Dorsolateral prefrontal cortex (tissue), 120 donors: ENCODE measurements at regions of chr7 and their contacts with region 1.

Region 1: DNA sequence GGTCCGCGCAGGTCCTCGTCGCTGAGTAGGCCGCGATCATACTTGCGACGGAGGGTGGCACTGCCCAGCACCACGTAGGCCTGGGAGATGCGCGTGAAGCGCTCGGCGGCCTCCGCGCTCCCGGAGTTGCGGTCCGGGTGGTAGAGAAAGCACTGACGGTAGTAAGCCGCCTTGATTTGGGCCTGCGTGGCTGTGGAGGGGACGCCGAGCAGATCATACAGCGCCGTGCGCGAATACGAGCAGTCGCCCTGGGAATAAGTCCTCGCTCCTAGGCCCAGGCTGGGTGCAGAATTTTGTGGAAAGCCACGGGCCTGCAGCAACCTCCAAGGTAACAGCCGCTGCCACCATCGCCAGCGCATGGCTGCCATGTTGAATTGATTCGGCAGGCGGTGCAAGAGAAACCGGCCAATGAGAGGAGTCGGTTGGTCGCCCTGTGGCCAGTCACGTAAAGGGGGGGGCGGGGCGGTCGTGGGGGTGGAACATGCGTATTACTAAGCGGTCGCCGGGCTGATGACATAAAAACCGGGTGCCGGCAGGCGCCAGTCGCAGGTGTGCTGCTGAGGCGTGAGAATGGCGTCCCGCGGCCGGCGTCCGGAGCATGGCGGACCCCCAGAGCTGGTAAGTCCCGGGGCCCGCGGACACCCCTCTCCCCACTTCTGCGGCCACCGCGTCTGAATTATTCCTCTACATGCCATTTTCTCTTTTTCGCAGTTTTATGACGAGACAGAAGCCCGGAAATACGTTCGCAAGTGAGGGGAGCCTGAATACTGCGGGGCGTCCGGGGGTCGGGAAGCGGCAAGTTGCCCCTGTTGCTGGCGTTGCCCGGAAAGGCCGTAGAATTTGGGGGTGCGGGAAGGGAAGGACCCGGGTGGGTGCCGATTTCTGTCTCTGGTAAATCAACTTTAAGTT is at the starts of genes BUD23 and DNAJC30:
- DNase-seq: peak; percentile 90 to 96 (median 94)
- H3K4me3 ChIP-seq: peak within 1 kb of the TSS; percentile 67 to 100 (median 96)
- H3K27ac ChIP-seq: peak within 1 kb of the TSS in 58 of 59 donors; percentile 13 to 94 (median 80)
- H3K27me3 ChIP-seq: no peaks in the 10 kb centered on the region
- CTCF ChIP-seq: peak in 42 of 56 donors; percentile 8 to 53 (median 33)
- total RNA-seq, gene BUD23: 32.0 to 61.9 (median 46.1) TPM
- total RNA-seq, gene DNAJC30: 9.5 to 21.4 (median 15.8) TPM

Region 2: GRCh38 chr7:73718905-73719805 is 35.8 kb after region 1 on chr7 and contains the start of gene STX1A:
- intact Hi-C with region 1: loop called (anchors 5 kb)
- DNase-seq: peak in 6 of 10 donors; percentile 48 to 85 (median 73)
- H3K4me3 ChIP-seq: peak within 1 kb of the TSS; percentile 45 to 94 (median 83)
- H3K27ac ChIP-seq: peak within 1 kb of the TSS in 27 of 59 donors; percentile 1 to 81 (median 54)
- H3K27me3 ChIP-seq: no peaks in the 10 kb centered on the region
- CTCF ChIP-seq: no peak
- total RNA-seq, gene STX1A: 59.6 to 264 (median 153) TPM